Tibial artery (tissue), 4 donors: ENCODE measurements at regions of chr11 and their contacts with region 1.

Region 1: GRCh38 chr11:99918761-99919160 is 768.3 kb upstream of the ARHGAP42 start:
- DNase-seq: no peak
- H3K4me3 ChIP-seq: no peak overlapping the region
- H3K27ac ChIP-seq: no peak overlapping the region
- H3K4me1 ChIP-seq: no peaks in the 10 kb centered on the region
- H3K27me3 ChIP-seq: no peaks in the 10 kb centered on the region
- CTCF ChIP-seq: no peak

Region 2: DNA sequence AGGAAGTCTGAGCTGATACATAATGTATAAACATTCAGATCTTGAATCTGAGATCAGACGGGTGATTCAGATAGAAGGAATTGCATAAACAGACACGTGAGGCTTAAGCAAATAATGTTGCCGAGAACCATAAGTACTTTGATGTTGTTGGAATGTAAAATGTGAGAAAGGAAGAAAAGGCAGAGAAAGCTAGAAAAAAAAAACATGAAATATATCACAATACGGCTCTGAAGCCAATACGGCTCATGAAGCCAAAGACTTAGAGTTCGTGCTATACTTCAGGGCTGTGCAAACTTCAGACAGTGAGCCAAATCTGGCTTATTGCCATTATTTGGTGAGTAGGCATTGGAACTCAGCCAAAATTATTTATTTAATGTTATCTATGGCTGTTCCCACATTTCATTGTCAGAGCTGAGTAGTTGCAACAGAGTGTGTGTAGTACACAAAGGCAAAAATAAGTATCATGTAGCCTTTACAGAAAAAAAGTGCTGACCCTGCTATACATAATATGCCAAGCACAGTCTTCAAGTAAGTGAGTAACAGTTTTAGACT is 224.7 kb before region 1 on chr11:
- intact Hi-C with region 1: loop called (anchors 2 kb)
- DNase-seq: no peak
- H3K4me3 ChIP-seq: no peak overlapping the region
- H3K27ac ChIP-seq: no peak overlapping the region
- H3K4me1 ChIP-seq: peaks cover 0 to 4% (median 0%) of the 10 kb centered on the region in 4 donors
- H3K27me3 ChIP-seq: no peaks in the 10 kb centered on the region
- CTCF ChIP-seq: no peak

Region 3: DNA sequence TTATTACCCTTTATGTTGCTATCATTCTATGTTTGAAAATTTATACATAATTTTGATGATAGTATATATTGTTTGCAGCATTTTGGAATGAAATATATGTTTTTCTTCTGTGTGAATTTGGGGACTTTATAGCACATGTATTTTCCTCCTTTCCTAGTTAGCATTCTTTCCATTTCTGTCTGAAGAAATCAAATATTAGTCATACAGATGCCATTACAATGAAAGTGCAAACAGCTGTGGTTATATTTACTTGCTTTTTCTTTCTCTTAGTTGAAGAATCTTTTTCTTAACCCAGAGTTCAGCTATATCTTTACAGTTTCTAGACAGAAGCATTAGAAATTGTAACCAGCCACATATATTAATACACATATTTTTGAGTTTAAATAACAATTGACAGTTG is 15.2 kb after region 1 on chr11:
- intact Hi-C with region 1: no loop called
- DNase-seq: no peak
- H3K4me3 ChIP-seq: no peak overlapping the region
- H3K27ac ChIP-seq: no peak overlapping the region
- H3K4me1 ChIP-seq: no peaks in the 10 kb centered on the region
- H3K27me3 ChIP-seq: no peaks in the 10 kb centered on the region
- CTCF ChIP-seq: no peak